ENCODE measurements at regions of chr5 and their contacts with region 1.

Region 1: GRCh38 chr5:55413644-55414043 is 105.9 kb downstream of the MTREX start:
- DNase-seq: no peak
- ATAC-seq: no peak
- H3K4me3 Mint-ChIP-seq: no peak overlapping the region
- H3K27ac Mint-ChIP-seq: no peak overlapping the region
- H3K4me1 Mint-ChIP-seq: no peaks in the 10 kb centered on the region
- H3K27me3 Mint-ChIP-seq: no peaks in the 10 kb centered on the region
- CTCF ChIP-seq: no peak

Region 2: DNA sequence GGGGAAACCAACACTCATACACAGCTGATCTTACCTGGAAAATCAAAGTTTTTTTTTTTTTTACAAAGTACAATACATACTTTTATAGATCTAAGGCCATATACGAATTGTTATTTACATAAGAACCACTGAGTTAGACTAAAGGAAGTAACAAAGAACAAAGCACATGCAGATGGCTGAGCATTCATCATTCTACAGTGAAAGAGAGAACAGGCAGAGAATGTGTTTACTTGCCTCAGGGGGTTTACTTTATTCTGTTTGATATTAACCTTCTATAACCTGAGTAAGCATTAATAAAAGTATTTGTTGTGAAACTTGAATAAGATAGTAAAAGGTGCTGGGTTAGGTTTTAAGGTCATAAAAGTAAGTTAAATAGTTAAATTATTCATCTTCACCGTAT is 243.8 kb after region 1 on chr5:
- CTCF ChIA-PET with region 1: no interaction called
- POLR2A ChIA-PET with region 1: no interaction called
- DNase-seq: no peak
- ATAC-seq: no peak
- H3K4me3 Mint-ChIP-seq: no peak overlapping the region
- H3K27ac Mint-ChIP-seq: no peak overlapping the region
- H3K4me1 Mint-ChIP-seq: peaks cover 18% of the 10 kb centered on the region
- H3K27me3 Mint-ChIP-seq: no peaks in the 10 kb centered on the region
- CTCF ChIP-seq: no peak

Region 3: GRCh38 chr5:56974241-56974640 is 1560.6 kb after region 1 on chr5:
- CTCF ChIA-PET with region 1: no interaction called
- POLR2A ChIA-PET with region 1: interaction called, 10 read pairs
- DNase-seq: no peak
- ATAC-seq: no peak
- H3K4me3 Mint-ChIP-seq: no peak overlapping the region
- H3K27ac Mint-ChIP-seq: no peak overlapping the region
- H3K4me1 Mint-ChIP-seq: peaks cover 2% of the 10 kb centered on the region; the same call in 1 of the 2 replicates
- H3K27me3 Mint-ChIP-seq: no peaks in the 10 kb centered on the region
- CTCF ChIP-seq: no peak